ENCODE measurements at regions of chr6 and their contacts with region 1.

Region 1: DNA sequence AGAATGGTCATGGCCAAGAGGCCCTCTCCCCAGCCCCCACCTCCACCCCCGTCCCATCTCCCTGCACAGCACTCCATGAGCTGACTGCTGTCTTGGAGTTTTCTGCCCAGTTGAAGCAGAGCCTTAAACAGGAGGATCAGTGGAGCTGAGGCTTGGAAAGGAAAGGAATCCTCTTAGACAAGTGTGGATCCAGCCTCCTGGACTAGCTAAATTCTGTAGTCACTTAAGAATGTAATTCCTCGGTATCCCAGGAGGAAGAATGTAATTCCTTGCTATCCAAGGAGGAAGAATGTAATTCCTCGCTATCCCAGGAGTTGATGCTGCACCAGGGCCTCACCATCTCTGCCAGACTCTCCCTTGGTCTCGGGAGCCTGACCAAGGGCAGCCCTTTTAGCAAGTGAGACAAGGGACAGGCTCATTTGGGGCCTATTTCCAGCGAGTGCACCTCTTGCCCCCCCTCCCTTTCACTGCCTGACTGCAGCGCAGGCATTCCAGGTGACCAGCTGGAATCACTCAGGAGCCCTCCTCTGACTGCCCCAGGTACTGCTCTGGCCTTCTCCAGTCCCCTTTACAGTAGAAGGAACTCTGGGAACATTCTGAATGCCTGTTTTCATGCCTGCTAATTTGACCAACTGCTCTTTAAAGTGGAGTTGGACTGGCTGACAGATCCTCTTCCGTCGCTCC is 76.2 kb downstream of the TCP11 start:
- DNase-seq: peak; percentile 27
- H3K4me3 ChIP-seq: no peak overlapping the region
- H3K27ac ChIP-seq: no peak overlapping the region
- H3K4me1 ChIP-seq: peaks cover 0 to 34% (median 16%) of the 10 kb centered on the region in 6 donors
- H3K27me3 ChIP-seq: no peaks in the 10 kb centered on the region
- CTCF ChIP-seq: no peak
- POLR2A ChIP-seq: no peak

Region 2: DNA sequence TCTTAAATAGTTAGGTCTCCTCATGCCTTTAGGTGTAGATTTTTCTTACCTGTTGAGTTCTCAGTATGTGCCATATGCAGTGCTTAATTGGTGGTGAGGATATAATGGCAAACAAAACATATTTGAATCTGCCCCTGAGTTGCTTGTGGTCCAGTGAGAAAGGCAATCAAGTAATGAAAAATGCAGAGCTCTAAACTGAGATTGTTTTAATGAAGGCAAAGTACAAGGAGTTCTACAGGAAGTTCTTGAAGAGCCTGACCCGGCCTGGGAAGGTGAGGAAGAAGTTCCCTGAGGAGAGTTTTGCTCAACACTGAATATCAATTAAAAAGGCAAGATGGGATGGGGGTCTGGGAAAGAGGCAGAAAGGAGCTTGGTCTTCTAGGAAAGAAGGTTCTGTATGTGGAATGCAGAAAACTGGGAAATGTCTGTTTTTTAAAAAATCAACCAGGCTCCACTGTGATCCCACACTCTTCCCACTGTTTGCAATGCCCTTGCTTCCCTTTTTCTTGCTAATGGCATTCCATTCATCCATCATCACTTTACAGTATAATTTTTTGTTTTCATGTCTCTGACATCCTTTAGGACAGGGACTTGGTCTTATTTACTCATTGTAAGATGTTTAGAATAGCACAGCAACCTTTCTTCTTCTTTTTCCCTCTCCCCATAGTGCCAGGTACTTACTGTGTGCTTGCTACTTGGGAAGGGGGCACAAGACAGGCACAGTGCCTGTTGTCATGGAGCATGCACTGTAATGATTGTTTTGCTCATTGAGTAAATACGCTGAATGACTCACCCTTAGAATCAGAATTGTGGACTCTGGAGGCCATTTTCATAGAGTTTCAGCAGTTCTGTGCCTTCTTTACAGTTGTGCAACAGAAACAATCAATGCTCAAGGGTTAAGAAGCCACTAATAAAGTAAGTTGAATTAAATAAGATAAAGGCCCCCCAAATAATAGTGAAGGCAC is 111.6 kb before region 1 on chr6:
- intact Hi-C with region 1: no loop called
- DNase-seq: no peak
- H3K4me3 ChIP-seq: no peak overlapping the region
- H3K27ac ChIP-seq: peak overlapping the region in 2 of 8 donors; percentile 9 to 11
- H3K4me1 ChIP-seq: peaks cover 4 to 59% (median 25%) of the 10 kb centered on the region in 6 donors
- H3K27me3 ChIP-seq: no peaks in the 10 kb centered on the region
- CTCF ChIP-seq: no peak
- POLR2A ChIP-seq: no peak

Region 3: GRCh38 chr6:35016502-35017321 is 48.2 kb before region 1 on chr6:
- intact Hi-C with region 1: loop called (anchors 10 kb)
- DNase-seq: no peak
- H3K4me3 ChIP-seq: peak overlapping the region in 7 of 8 donors; percentile 30 to 67 (median 39)
- H3K27ac ChIP-seq: peak overlapping the region; percentile 61 to 88 (median 81)
- H3K4me1 ChIP-seq: peaks cover 5 to 68% (median 32%) of the 10 kb centered on the region in 6 donors
- H3K27me3 ChIP-seq: no peaks in the 10 kb centered on the region
- CTCF ChIP-seq: no peak
- POLR2A ChIP-seq: peak in 1 of 3 donors; percentile 52

Region 4: DNA sequence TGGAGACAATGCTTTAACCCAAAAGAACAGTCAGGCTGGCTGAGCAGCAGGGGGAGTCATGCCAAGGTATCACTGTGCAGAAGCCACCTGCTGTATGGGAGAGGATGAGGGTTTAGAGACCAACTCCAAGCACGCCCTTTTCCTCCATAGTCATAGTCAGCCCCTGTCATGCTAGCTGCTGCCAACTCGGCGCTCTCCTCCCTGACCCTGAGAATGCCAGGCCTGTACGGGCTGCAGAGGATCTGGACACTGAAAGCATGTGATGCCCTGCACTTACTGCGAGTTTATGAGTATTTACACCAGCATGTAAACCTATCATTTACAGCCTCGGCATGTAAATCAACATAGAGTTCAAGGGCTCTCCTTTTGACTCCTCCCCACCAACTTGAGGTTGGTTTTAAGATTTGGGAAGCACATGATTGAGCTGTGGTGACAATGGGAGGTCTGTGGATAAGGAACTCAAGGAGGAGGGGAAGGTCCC is 137.2 kb after region 1 on chr6:
- intact Hi-C with region 1: no loop called
- DNase-seq: no peak
- H3K4me3 ChIP-seq: no peak overlapping the region
- H3K27ac ChIP-seq: no peak overlapping the region
- H3K4me1 ChIP-seq: no peaks in the 10 kb centered on the region
- H3K27me3 ChIP-seq: peaks cover 0 to 48% (median 0%) of the 10 kb centered on the region in 7 donors
- CTCF ChIP-seq: no peak
- POLR2A ChIP-seq: no peak

Region 5: DNA sequence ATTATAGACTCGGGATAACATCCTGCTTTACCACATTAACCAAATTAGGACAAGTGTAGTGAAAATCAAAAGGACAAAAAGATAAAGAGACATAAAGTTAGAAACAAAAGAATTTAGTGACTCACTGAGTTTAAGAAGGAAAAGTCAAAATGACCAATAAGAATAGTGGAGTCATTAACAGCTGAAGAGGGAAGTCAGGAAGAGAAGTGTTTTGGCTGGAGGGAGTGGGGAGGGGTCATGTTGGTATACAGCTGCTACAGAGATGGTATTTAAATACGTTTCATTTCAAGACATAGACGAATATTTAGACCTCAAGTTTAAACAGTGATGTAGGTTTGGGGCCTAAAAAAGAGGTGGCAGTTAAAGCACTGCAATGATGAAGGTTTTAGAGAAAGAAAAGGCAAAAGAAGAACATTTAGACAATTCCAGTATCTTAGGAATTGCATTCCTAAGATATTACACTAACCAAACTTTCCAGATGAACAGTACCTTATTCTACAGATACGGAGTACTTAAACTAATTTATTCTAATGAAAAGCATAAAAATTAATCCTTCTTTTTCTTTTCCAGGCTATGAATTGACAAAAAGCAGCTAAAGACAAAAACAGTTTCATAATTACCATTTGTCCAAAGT is 613.2 kb after region 1 on chr6:
- intact Hi-C with region 1: no loop called
- DNase-seq: no peak
- H3K4me3 ChIP-seq: no peak overlapping the region
- H3K27ac ChIP-seq: peak overlapping the region in 4 of 8 donors; percentile 2 to 67 (median 36)
- H3K4me1 ChIP-seq: peaks cover 16 to 100% (median 81%) of the 10 kb centered on the region in 6 donors
- H3K27me3 ChIP-seq: no peaks in the 10 kb centered on the region
- CTCF ChIP-seq: no peak
- POLR2A ChIP-seq: no peak

Measured in spleen (tissue), 13 donors.